ENCODE measurements at regions of chr1 and their contacts with region 1.

Region 1: GRCh38 chr1:44941424-44942324 is 44.7 kb downstream of the EIF2B3 start:
- DNase-seq: peak; percentile 31
- ATAC-seq: peak; percentile 95
- H3K4me3 Mint-ChIP-seq: no peak overlapping the region
- H3K27ac Mint-ChIP-seq: peak overlapping the region; percentile 62
- H3K4me1 Mint-ChIP-seq: peaks cover 14% of the 10 kb centered on the region
- H3K27me3 Mint-ChIP-seq: no peaks in the 10 kb centered on the region

Region 2: DNA sequence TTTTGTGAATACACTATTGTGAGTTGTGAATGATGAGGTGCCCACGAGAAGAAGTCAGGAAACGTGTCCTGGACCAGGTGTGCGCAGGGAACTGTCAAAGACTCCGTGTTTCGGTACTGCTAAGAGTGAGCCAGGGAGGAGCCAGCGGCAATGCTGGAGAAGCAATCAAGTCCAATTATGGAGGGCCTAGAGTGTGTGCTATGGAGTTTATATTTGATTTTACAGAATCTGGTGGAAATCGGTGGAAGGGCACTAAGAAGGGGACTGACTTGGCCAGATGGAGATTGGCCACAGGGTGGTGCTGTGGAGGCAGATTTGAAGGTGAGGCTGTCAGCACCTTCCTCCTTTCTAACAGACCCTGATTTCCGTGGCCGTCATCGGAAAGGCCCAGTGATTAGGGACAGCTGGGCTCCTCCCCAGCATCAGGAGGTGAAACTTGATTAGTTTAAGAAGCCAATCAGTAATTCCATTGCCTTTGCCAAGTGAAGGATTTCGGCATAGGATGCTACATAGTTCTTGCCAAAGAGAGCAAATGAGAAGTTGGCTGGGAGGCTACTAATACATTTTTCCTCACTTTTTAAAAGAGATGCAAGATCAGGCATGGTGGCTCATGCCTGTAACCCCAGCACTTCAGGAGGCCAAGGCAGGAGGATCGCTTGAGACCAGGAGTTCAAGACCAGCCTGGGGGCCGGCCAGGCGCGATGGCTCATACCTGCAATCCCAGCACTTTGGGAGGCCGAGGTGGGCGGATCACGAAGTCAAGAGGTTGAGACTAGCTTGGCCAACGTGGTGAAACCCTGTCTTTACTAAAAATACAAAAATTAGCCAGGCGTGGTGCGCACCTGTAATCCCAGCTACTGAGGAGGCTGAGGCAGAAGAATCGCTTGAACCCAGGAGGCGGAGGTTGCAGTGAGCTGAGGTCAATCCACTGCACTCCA is 105.7 kb before region 1 on chr1:
- CTCF ChIA-PET with region 1: interaction called, 3 read pairs
- POLR2A ChIA-PET with region 1: no interaction called
- intact Hi-C with region 1: loop called in 1 of 2 experiments (anchors 5 kb)
- DNase-seq: peak; percentile 96
- ATAC-seq: peak; percentile 99
- H3K4me3 Mint-ChIP-seq: no peak overlapping the region
- H3K27ac Mint-ChIP-seq: no peak overlapping the region
- H3K4me1 Mint-ChIP-seq: peaks cover 3% of the 10 kb centered on the region
- H3K27me3 Mint-ChIP-seq: peaks cover 5% of the 10 kb centered on the region

Region 3: DNA sequence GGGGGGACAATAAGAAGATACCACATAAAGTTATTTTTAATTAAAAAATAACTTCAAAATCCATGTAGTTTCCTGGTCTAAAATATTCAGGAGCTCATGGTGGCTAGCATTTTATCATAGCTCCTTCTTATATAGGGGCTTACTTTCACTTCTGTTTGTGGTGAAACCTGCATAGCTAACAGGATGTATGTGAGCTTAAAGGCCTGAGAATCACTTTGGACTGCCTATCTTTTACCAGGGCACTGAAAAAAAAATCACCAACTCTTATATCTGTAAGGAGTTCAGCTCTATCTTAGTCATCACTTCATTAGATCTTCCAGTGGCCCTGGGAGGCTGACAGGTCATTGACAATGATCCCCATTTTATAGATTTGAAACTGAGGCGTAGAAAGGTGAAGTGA is 91.7 kb after region 1 on chr1:
- CTCF ChIA-PET with region 1: no interaction called
- POLR2A ChIA-PET with region 1: no interaction called
- intact Hi-C with region 1: no loop called
- DNase-seq: no peak
- ATAC-seq: no peak
- H3K4me3 Mint-ChIP-seq: no peak overlapping the region
- H3K27ac Mint-ChIP-seq: no peak overlapping the region
- H3K4me1 Mint-ChIP-seq: peaks cover 7% of the 10 kb centered on the region
- H3K27me3 Mint-ChIP-seq: no peaks in the 10 kb centered on the region

Region 4: GRCh38 chr1:45906883-45907282 is 965.2 kb after region 1 on chr1:
- CTCF ChIA-PET with region 1: no interaction called
- POLR2A ChIA-PET with region 1: interaction called, 10 read pairs
- intact Hi-C with region 1: no loop called
- DNase-seq: no peak
- ATAC-seq: no peak
- H3K4me3 Mint-ChIP-seq: no peak overlapping the region
- H3K27ac Mint-ChIP-seq: no peak overlapping the region
- H3K4me1 Mint-ChIP-seq: no peaks in the 10 kb centered on the region
- H3K27me3 Mint-ChIP-seq: no peaks in the 10 kb centered on the region